Activated naive CD4-positive, alpha-beta T cell treated with anti-CD3 and anti-CD28 coated beads, Interleukin-2, amount 10 ng/mL, durations not matched to agents 7 days and 5 days (primary cell): ENCODE measurements at regions of chr17 and their contacts with region 1.

Region 1: GRCh38 chr17:74736513-74737298 is at the start of gene RAB37:
- DNase-seq: peak; percentile 66
- H3K4me3 Mint-ChIP-seq: peak within 1 kb of the TSS; percentile 92
- H3K27ac Mint-ChIP-seq: peak within 1 kb of the TSS; percentile 96
- H3K4me1 Mint-ChIP-seq: peaks cover 59% of the 10 kb centered on the region
- H3K27me3 Mint-ChIP-seq: peaks cover 6% of the 10 kb centered on the region

Region 2: DNA sequence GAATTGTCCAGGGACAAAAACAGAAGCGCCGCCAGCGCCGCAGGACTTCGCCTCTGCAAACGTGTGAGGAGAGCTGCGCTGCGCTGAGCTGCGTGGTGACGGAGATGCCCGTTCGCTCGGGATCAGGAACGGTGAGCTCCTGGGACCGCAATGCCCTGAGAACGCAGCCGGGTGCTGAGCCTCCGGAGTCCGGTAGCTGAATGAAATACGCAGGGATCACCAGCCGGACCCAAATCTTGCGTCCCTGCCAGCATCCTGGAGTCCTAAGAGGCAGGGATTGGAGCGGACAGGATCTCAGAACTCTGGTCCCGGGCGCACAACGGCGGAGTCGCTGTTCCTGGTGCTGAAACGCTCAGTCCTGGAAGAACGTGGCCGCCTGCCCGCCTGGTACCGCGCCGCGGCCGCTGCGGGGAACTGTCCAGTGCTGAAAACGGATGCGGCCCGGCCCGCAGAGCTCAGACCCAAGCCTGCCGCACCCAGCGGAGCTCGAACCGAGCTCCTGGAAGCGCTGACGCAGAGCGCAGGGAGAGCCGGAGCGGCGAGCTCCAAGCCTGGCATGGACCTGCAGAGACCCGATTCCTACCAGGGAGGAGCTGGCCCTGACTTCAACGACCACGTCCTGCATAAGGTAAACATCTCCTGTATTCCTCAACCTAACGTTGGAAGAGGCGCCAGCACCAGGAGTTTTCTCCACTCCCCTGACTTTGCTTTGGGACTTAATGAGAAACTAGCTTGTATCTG is 65.5 kb before region 1 on chr17:
- CTCF ChIA-PET with region 1: interaction called, 29 read pairs
- DNase-seq: peak; percentile 89
- H3K4me3 Mint-ChIP-seq: no peak overlapping the region
- H3K27ac Mint-ChIP-seq: no peak overlapping the region
- H3K4me1 Mint-ChIP-seq: no peaks in the 10 kb centered on the region
- H3K27me3 Mint-ChIP-seq: peaks cover 83% of the 10 kb centered on the region

Region 3: DNA sequence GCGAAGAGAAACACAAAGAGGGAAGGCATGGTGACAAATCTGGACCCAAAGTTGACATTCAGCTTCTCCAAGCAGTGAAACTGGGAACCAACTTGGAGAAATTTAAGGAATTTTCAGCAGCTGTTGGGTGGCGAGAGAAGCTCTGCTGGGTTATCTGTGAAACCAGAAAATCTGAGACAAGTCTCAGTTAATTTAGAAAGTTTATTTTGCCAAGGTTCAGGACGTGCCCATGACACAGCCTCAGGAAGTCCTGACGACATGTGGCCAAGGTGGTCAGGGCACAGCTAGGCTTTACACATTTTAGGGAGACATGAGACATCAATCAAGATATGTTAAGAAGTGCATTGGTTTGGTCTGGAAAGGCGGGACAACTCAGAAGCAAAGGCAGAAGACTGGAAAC is 12.8 kb before region 1 on chr17:
- CTCF ChIA-PET with region 1: interaction called, 25 read pairs
- DNase-seq: no peak
- H3K4me3 Mint-ChIP-seq: no peak overlapping the region
- H3K27ac Mint-ChIP-seq: no peak overlapping the region
- H3K4me1 Mint-ChIP-seq: peaks cover 4% of the 10 kb centered on the region
- H3K27me3 Mint-ChIP-seq: peaks cover 48% of the 10 kb centered on the region

Region 4: GRCh38 chr17:74759243-74759801 is 22.6 kb after region 1 on chr17:
- CTCF ChIA-PET with region 1: interaction called, 27 read pairs
- DNase-seq: peak; percentile 80
- H3K4me3 Mint-ChIP-seq: peak overlapping the region; percentile 68
- H3K27ac Mint-ChIP-seq: peak overlapping the region; percentile 91
- H3K4me1 Mint-ChIP-seq: peaks cover 72% of the 10 kb centered on the region
- H3K27me3 Mint-ChIP-seq: no peaks in the 10 kb centered on the region

Region 5: GRCh38 chr17:74864866-74865395 is 128.2 kb after region 1 on chr17:
- CTCF ChIA-PET with region 1: interaction called, 10 read pairs
- DNase-seq: peak; percentile 80
- H3K4me3 Mint-ChIP-seq: no peak overlapping the region
- H3K27ac Mint-ChIP-seq: no peak overlapping the region
- H3K4me1 Mint-ChIP-seq: peaks cover 23% of the 10 kb centered on the region
- H3K27me3 Mint-ChIP-seq: peaks cover 43% of the 10 kb centered on the region

Region 6: GRCh38 chr17:74892974-74893911 is 156.5 kb after region 1 on chr17 and contains the start of gene FADS6:
- CTCF ChIA-PET with region 1: no interaction called
- DNase-seq: peak; percentile 32
- H3K4me3 Mint-ChIP-seq: peak within 1 kb of the TSS; percentile 37
- H3K27ac Mint-ChIP-seq: peak within 1 kb of the TSS; percentile 68
- H3K4me1 Mint-ChIP-seq: peaks cover 4% of the 10 kb centered on the region
- H3K27me3 Mint-ChIP-seq: peaks cover 82% of the 10 kb centered on the region